Left cardiac atrium (tissue), 4 donors: ENCODE measurements at regions of chr6 and their contacts with region 1.

Region 1: GRCh38 chr6:157235600-157236039 is 87.7 kb downstream of the TMEM242 start:
- DNase-seq: peak; percentile 70
- ATAC-seq: peak; percentile 75 to 82

Region 2: DNA sequence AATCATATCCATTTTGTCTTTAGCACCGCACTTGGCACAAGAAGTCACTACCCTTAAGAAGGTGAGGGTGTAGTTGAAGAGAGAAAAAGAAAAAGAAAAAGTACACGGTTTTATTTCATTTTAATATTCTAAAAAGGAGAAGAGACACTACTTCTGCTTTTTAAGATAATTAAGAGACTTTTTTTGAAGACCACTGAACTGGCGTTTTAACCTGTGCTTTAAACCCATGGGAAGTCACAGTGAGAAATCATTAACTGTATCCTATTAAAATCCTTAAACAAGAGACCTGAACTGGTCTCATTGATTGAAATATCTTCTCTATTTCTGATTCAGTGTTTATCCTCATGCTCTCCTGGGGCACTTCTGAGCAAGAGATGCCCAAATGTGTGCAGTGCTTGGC is 155.8 kb before region 1 on chr6:
- intact Hi-C with region 1: no loop called
- DNase-seq: no peak
- ATAC-seq: no peak

Region 3: GRCh38 chr6:157274471-157275226 is 39.0 kb after region 1 on chr6:
- intact Hi-C with region 1: loop called in 1 of 2 experiments (anchors 5 kb)
- DNase-seq: peak; percentile 81
- ATAC-seq: peak; percentile 95 to 96

Region 4: GRCh38 chr6:157571269-157571668 is 335.6 kb after region 1 on chr6:
- intact Hi-C with region 1: no loop called
- DNase-seq: no peak
- ATAC-seq: no peak